K562 (cell line): ENCODE measurements at regions of chr1 and their contacts with region 1.

Region 1: GRCh38 chr1:107047556-107047955 is 8.9 kb upstream of the PRMT6 start:
- DNase-seq: no peak
- ATAC-seq: no peak
- H3K4me3 ChIP-seq: no peak overlapping the region
- H3K27ac ChIP-seq: no peak overlapping the region
- H3K4me1 ChIP-seq: peaks cover 0 to 9% of the 10 kb centered on the region in 2 experiments; a peak in 1 of 5 replicates
- H3K27me3 ChIP-seq: no peaks in the 10 kb centered on the region
- CTCF ChIP-seq: peak in 1 of 3 experiments; percentile 13; a peak in 1 of 6 replicates
- EP300 ChIP-seq: no peak
- POLR2A ChIP-seq: no peak
- RAD21 ChIP-seq: no peak

Region 2: DNA sequence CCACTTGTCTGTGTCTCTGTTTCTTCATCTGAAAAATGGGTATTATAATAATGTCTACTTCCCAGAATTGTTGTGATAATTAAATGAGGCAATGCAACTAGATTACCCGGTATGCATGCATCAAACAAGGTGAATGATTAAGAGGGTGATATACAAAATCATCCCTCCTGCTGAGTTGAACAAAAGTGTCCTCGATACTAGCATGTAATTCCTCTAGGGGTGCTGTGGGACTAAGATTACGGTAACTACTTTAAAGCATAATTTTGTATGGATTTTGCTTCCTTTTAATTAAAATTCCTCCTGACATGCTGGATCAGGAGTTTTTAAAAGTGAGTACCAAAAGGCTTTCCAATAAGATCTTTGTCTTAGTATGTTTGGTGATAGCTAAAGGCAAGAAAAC is 89.8 kb before region 1 on chr1:
- CTCF ChIA-PET with region 1: no interaction called
- POLR2A ChIA-PET with region 1: no interaction called
- in situ Hi-C with region 1: no loop called
- intact Hi-C with region 1: no loop called
- DNase-seq: no peak
- ATAC-seq: no peak
- H3K4me3 ChIP-seq: no peak overlapping the region
- H3K27ac ChIP-seq: no peak overlapping the region
- H3K4me1 ChIP-seq: no peaks in the 10 kb centered on the region
- H3K27me3 ChIP-seq: no peaks in the 10 kb centered on the region
- CTCF ChIP-seq: no peak
- EP300 ChIP-seq: no peak
- POLR2A ChIP-seq: no peak
- RAD21 ChIP-seq: no peak

Region 3: GRCh38 chr1:107142140-107142542 is 94.6 kb after region 1 on chr1:
- CTCF ChIA-PET with region 1: no interaction called
- POLR2A ChIA-PET with region 1: no interaction called
- in situ Hi-C with region 1: no loop called
- intact Hi-C with region 1: loop called (anchors 10 kb)
- DNase-seq: peak; percentile 8 to 36 (median 20)
- ATAC-seq: 0 out of 3 replicates have a peak, but pooled peaks have one; percentile 47
- H3K4me3 ChIP-seq: no peak overlapping the region
- H3K27ac ChIP-seq: no peak overlapping the region
- H3K4me1 ChIP-seq: peaks cover 0 to 5% of the 10 kb centered on the region in 2 experiments; a peak in 1 of 5 replicates
- H3K27me3 ChIP-seq: no peaks in the 10 kb centered on the region
- CTCF ChIP-seq: peak in 2 of 3 experiments; percentile 42 to 50; a peak in 3 of 6 replicates
- EP300 ChIP-seq: no peak
- POLR2A ChIP-seq: no peak
- RAD21 ChIP-seq: peak; percentile 31 to 45; a peak in 3 of 4 replicates

Region 4: DNA sequence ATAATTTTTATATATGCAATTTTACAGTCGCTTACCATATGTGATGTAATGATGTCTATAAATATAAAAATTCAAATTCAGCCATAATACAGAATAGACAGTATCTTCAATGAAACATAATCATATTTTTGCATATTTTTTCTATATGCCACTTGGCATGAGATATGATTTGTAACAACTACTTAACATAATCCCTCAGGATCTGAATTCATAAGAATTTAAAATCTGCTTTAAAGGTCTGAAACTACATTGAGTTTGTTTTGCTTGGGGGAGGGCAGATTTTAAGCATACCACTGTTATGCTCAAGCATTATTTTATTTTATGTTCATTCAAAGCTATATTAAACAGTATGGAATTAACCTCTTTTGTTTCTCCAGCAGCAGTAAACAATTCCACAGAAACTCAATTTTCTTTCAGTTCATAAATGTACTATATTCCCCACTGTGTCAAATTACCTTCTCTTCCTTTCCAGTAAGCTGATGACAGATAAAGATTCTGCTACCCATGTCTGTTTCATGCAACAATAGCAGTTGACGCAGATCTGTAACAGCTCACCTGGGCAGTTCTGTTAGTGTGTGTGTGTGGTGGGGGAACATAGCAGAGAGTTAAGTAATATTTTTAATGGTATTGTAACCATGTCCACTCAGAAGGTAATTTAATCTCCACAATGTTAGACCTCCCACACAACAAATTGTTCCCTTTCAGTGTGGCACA is 318.1 kb after region 1 on chr1:
- CTCF ChIA-PET with region 1: no interaction called
- POLR2A ChIA-PET with region 1: no interaction called
- in situ Hi-C with region 1: no loop called
- intact Hi-C with region 1: no loop called
- DNase-seq: no peak
- ATAC-seq: no peak
- H3K4me3 ChIP-seq: no peak overlapping the region
- H3K27ac ChIP-seq: no peak overlapping the region
- H3K4me1 ChIP-seq: no peaks in the 10 kb centered on the region
- H3K27me3 ChIP-seq: no peaks in the 10 kb centered on the region
- CTCF ChIP-seq: no peak
- EP300 ChIP-seq: no peak
- POLR2A ChIP-seq: no peak
- RAD21 ChIP-seq: no peak